Left ventricle myocardium inferior (tissue), 1 donor: ENCODE measurements at regions of chr3 and their contacts with region 1.

Region 1: GRCh38 chr3:133927540-133928066 is 31.9 kb upstream of the RAB6B start:
- DNase-seq: peak; percentile 70
- H3K4me3 ChIP-seq: peak overlapping the region; percentile 75
- H3K27ac ChIP-seq: no peak overlapping the region
- H3K4me1 ChIP-seq: peaks cover 12% of the 10 kb centered on the region
- H3K27me3 ChIP-seq: no peaks in the 10 kb centered on the region
- CTCF ChIP-seq: peak; percentile 90

Region 2: GRCh38 chr3:133742351-133743091 is 185.1 kb before region 1 on chr3:
- intact Hi-C with region 1: no loop called
- DNase-seq: no peak
- H3K4me3 ChIP-seq: no peak overlapping the region
- H3K27ac ChIP-seq: no peak overlapping the region
- H3K4me1 ChIP-seq: peaks cover 7% of the 10 kb centered on the region
- H3K27me3 ChIP-seq: peaks cover 50% of the 10 kb centered on the region
- CTCF ChIP-seq: no peak

Region 3: DNA sequence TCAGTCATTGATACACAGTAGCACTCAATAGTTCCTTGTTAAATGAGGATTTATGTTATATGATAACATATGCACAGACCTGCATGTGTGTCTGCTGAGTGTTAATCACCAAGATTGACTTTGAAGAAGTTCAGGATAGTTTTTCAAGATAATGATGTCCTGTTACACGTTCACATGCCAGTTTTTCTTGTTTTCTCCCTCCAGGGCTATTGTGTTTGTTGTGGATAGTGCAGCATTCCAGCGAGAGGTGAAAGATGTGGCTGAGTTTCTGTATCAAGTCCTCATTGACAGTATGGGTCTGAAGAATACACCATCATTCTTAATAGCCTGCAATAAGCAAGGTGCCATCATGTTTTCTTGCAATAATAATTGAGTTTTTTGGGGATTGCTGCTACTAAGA is 112.2 kb before region 1 on chr3:
- intact Hi-C with region 1: loop called (anchors 5 kb)
- DNase-seq: no peak
- H3K4me3 ChIP-seq: no peak overlapping the region
- H3K27ac ChIP-seq: no peak overlapping the region
- H3K4me1 ChIP-seq: peaks cover 12% of the 10 kb centered on the region
- H3K27me3 ChIP-seq: no peaks in the 10 kb centered on the region
- CTCF ChIP-seq: no peak

Region 4: DNA sequence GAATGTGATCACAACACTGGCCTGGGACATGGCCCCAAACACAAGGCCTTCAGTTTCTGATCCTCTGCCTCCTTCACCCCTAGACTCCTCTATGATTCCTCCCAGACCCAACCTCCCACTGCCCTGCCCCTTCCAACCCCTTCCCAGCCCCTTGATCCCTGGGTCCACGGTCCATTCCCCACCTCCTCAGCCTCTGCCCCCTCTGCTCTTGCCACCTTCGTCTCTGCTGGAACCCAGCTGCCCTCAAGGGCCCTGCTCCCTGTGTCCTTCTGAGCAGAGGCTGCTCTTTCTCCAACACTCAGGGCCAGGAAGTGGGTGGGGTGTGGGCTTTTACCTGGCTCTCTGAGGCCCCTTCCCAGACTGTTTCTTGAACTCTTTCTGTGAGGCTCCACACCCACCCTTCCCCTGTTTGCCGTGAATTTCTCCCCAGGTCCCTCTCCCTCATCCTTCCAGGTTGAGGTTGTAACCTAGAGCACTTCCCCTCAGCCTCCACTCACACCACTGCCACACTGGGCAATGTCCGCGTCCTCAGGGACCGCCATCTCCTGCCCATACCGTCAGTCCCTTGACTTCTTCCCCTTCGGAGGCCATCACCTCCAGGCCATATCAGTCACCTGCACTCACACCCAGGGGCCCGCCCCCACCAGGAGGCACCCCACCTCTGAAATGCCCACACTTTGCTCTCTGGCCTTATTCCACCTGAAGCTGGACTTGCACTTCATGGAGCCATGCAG is 120.8 kb after region 1 on chr3:
- intact Hi-C with region 1: loop called (anchors 10 kb)
- DNase-seq: no peak
- H3K4me3 ChIP-seq: no peak overlapping the region
- H3K27ac ChIP-seq: no peak overlapping the region
- H3K4me1 ChIP-seq: no peaks in the 10 kb centered on the region
- H3K27me3 ChIP-seq: no peaks in the 10 kb centered on the region
- CTCF ChIP-seq: no peak

Region 5: GRCh38 chr3:134059671-134060560 is 132.3 kb after region 1 on chr3:
- intact Hi-C with region 1: no loop called
- DNase-seq: no peak
- H3K4me3 ChIP-seq: no peak overlapping the region
- H3K27ac ChIP-seq: no peak overlapping the region
- H3K4me1 ChIP-seq: peaks cover 17% of the 10 kb centered on the region
- H3K27me3 ChIP-seq: no peaks in the 10 kb centered on the region
- CTCF ChIP-seq: no peak

Region 6: GRCh38 chr3:134333522-134334181 is 406.0 kb after region 1 on chr3:
- intact Hi-C with region 1: no loop called
- DNase-seq: no peak
- H3K4me3 ChIP-seq: no peak overlapping the region
- H3K27ac ChIP-seq: peak overlapping the region; percentile 77
- H3K4me1 ChIP-seq: peaks cover 62% of the 10 kb centered on the region
- H3K27me3 ChIP-seq: no peaks in the 10 kb centered on the region
- CTCF ChIP-seq: peak; percentile 29